Caco-2 (cell line): ENCODE measurements at regions of chr11 and their contacts with region 1.

Region 1: GRCh38 chr11:62108017-62108750 is 15.6 kb upstream of the INCENP start:
- DNase-seq: peak in 1 of 2 experiments; percentile 64
- H3K4me3 ChIP-seq: no peak overlapping the region
- H3K4me3 Mint-ChIP-seq: no peak overlapping the region
- H3K27ac Mint-ChIP-seq: no peak overlapping the region
- H3K4me1 ChIP-seq: peaks cover 3% of the 10 kb centered on the region; the same call in 1 of the 2 replicates
- H3K4me1 Mint-ChIP-seq: no peaks in the 10 kb centered on the region
- H3K27me3 ChIP-seq: no peaks in the 10 kb centered on the region
- H3K27me3 Mint-ChIP-seq: no peaks in the 10 kb centered on the region
- CTCF ChIP-seq: peak; percentile 75 to 76

Region 2: GRCh38 chr11:61816736-61817455 is 291.3 kb before region 1 on chr11 and contains the start of gene FADS1:
- CTCF ChIA-PET with region 1: interaction called, 12 read pairs
- POLR2A ChIA-PET with region 1: interaction called, 3 read pairs
- intact Hi-C with region 1: no loop called
- DNase-seq: peak; percentile 98 to 99
- H3K4me3 ChIP-seq: peak within 1 kb of the TSS; percentile 85
- H3K4me3 Mint-ChIP-seq: peak within 1 kb of the TSS; percentile 81
- H3K27ac Mint-ChIP-seq: peak within 1 kb of the TSS; percentile 90
- H3K4me1 ChIP-seq: peaks cover 16% of the 10 kb centered on the region
- H3K4me1 Mint-ChIP-seq: peaks cover 18% of the 10 kb centered on the region
- H3K27me3 ChIP-seq: no peaks in the 10 kb centered on the region
- H3K27me3 Mint-ChIP-seq: no peaks in the 10 kb centered on the region
- CTCF ChIP-seq: peak; percentile 72 to 95
- total RNA-seq, gene FADS1: 108 and 116 TPM in 2 replicates

Region 3: GRCh38 chr11:61871158-61871597 is 237.0 kb before region 1 on chr11:
- CTCF ChIA-PET with region 1: interaction called, 11 read pairs
- POLR2A ChIA-PET with region 1: no interaction called
- intact Hi-C with region 1: no loop called
- DNase-seq: peak; percentile 64 to 79
- H3K4me3 ChIP-seq: no peak overlapping the region
- H3K4me3 Mint-ChIP-seq: no peak overlapping the region
- H3K27ac Mint-ChIP-seq: no peak overlapping the region
- H3K4me1 ChIP-seq: peaks cover 12% of the 10 kb centered on the region
- H3K4me1 Mint-ChIP-seq: no peaks in the 10 kb centered on the region
- H3K27me3 ChIP-seq: no peaks in the 10 kb centered on the region
- H3K27me3 Mint-ChIP-seq: no peaks in the 10 kb centered on the region
- CTCF ChIP-seq: peak; percentile 83 to 86

Region 4: GRCh38 chr11:61899146-61899841 is 208.9 kb before region 1 on chr11:
- CTCF ChIA-PET with region 1: interaction called, 40 read pairs
- POLR2A ChIA-PET with region 1: no interaction called
- intact Hi-C with region 1: loop called (anchors 1 kb)
- DNase-seq: peak; percentile 89 to 96
- H3K4me3 ChIP-seq: no peak overlapping the region
- H3K4me3 Mint-ChIP-seq: no peak overlapping the region
- H3K27ac Mint-ChIP-seq: no peak overlapping the region
- H3K4me1 ChIP-seq: no peaks in the 10 kb centered on the region
- H3K4me1 Mint-ChIP-seq: no peaks in the 10 kb centered on the region
- H3K27me3 ChIP-seq: no peaks in the 10 kb centered on the region
- H3K27me3 Mint-ChIP-seq: no peaks in the 10 kb centered on the region
- CTCF ChIP-seq: peak; percentile 100

Region 5: DNA sequence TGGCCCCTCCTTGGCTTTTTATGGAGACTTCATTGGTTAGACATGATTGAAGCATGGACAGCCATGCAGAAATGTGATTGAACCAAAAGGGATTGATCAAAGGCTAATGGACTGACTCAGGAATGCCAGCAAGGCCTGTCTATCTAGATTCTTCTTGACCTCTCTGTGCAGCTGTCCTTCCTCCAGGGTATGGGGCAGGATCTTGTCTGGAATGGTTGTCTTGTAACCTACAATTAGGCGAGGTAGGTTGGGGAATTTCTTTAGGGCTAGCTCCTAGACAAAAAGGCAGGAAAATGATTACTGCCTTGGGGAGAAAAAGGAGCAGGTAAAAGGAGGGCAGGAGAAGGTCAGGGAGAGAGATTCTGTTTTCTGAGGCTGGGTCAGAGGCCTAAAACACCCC is 44.0 kb before region 1 on chr11:
- CTCF ChIA-PET with region 1: interaction called, 9 read pairs
- POLR2A ChIA-PET with region 1: no interaction called
- intact Hi-C with region 1: loop called (anchors 2 kb)
- DNase-seq: peak in 1 of 2 experiments; percentile 67
- H3K4me3 ChIP-seq: no peak overlapping the region
- H3K4me3 Mint-ChIP-seq: no peak overlapping the region
- H3K27ac Mint-ChIP-seq: peak overlapping the region; percentile 57
- H3K4me1 ChIP-seq: no peaks in the 10 kb centered on the region
- H3K4me1 Mint-ChIP-seq: no peaks in the 10 kb centered on the region
- H3K27me3 ChIP-seq: no peaks in the 10 kb centered on the region
- H3K27me3 Mint-ChIP-seq: peaks cover under 1% of the 10 kb centered on the region
- CTCF ChIP-seq: no peak

Region 6: DNA sequence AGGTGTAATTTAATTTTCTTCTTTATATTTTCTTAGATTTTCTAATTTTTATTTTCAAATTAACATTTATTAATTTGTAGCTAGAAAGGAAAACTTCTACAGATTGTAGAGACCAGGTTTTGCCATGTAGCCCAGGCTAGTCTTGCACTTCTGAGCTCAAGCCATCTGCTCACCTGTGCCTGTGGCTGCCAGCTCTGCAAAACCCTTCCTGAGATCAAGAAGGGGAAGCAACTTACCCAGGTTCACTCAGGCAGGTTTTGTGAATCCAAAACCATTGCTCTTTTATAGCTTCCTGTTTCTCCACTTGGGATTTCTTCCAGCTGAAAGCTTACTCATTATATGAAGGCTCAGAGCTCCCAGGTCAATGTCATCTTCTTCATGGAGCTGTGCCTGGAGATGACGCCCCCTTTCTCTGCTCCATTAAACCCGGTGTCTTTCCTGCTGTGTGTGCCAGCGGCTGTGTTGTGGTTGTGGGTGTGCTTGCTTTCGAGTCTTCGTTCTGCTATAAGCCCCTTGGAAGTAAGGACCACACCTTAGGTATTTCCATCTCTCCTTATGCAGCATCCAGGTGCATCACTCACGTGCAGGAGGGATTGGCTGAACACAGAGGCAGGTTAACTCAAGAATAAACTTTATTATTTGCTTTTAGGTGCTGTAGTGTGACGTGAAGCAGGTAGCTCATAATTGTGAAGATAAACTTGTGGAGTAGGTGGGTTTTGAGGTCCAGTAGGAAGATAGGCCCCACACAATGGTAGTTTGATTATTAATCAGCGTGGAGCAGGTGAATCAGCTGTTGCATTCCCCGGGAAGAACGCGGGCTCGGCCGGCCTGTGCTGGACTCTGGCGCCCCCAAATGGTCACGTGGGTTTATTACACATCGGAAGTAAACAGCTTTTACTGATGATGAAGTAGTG is 26.5 kb before region 1 on chr11:
- CTCF ChIA-PET with region 1: interaction called, 34 read pairs
- POLR2A ChIA-PET with region 1: interaction called, 11 read pairs
- intact Hi-C with region 1: loop called (anchors 1 kb)
- DNase-seq: peak; percentile 71 to 87
- H3K4me3 ChIP-seq: no peak overlapping the region
- H3K4me3 Mint-ChIP-seq: no peak overlapping the region
- H3K27ac Mint-ChIP-seq: no peak overlapping the region
- H3K4me1 ChIP-seq: no peaks in the 10 kb centered on the region
- H3K4me1 Mint-ChIP-seq: no peaks in the 10 kb centered on the region
- H3K27me3 ChIP-seq: no peaks in the 10 kb centered on the region; the same call in 1 of the 2 replicates
- H3K27me3 Mint-ChIP-seq: no peaks in the 10 kb centered on the region
- CTCF ChIP-seq: peak; percentile 89 to 91

Region 7: GRCh38 chr11:62123669-62124185 is 15.5 kb after region 1 on chr11 and contains the start of gene INCENP:
- CTCF ChIA-PET with region 1: interaction called, 5 read pairs
- POLR2A ChIA-PET with region 1: interaction called, 6 read pairs
- intact Hi-C with region 1: loop called (anchors 1 kb)
- DNase-seq: peak; percentile 97 to 98
- H3K4me3 ChIP-seq: peak within 1 kb of the TSS; percentile 96
- H3K4me3 Mint-ChIP-seq: peak within 1 kb of the TSS; percentile 98
- H3K27ac Mint-ChIP-seq: peak within 1 kb of the TSS; percentile 98
- H3K4me1 ChIP-seq: peaks cover 5% of the 10 kb centered on the region
- H3K4me1 Mint-ChIP-seq: peaks cover 14% of the 10 kb centered on the region
- H3K27me3 ChIP-seq: no peaks in the 10 kb centered on the region
- H3K27me3 Mint-ChIP-seq: no peaks in the 10 kb centered on the region
- CTCF ChIP-seq: no peak
- total RNA-seq, gene INCENP: 101 and 110 TPM in 2 replicates

Region 8: GRCh38 chr11:62201370-62201769 is 93.2 kb after region 1 on chr11:
- CTCF ChIA-PET with region 1: no interaction called
- POLR2A ChIA-PET with region 1: no interaction called
- intact Hi-C with region 1: no loop called
- DNase-seq: no peak
- H3K4me3 ChIP-seq: no peak overlapping the region
- H3K4me3 Mint-ChIP-seq: no peak overlapping the region
- H3K27ac Mint-ChIP-seq: no peak overlapping the region
- H3K4me1 ChIP-seq: no peaks in the 10 kb centered on the region
- H3K4me1 Mint-ChIP-seq: no peaks in the 10 kb centered on the region
- H3K27me3 ChIP-seq: 0 out of 2 replicates have a peak, but pooled peaks cover 1% of the 10 kb centered on the region
- H3K27me3 Mint-ChIP-seq: peaks cover 27% of the 10 kb centered on the region
- CTCF ChIP-seq: no peak